CD8-positive, alpha-beta memory T cell (primary cell): ENCODE measurements at regions of chr19 and their contacts with region 1.

Region 1: GRCh38 chr19:51158474-51159129 is 16.5 kb downstream of the SIGLEC7 start:
- DNase-seq: peak; percentile 52 to 75 (median 62)
- H3K4me3 ChIP-seq: no peak overlapping the region
- H3K4me3 Mint-ChIP-seq: peak overlapping the region in 1 of 7 donors; percentile 78
- H3K27ac ChIP-seq: no peak overlapping the region
- H3K27ac Mint-ChIP-seq: peak overlapping the region in 3 of 8 donors; percentile 23 to 83 (median 44)
- H3K4me1 ChIP-seq: peaks cover 7% of the 10 kb centered on the region
- H3K4me1 Mint-ChIP-seq: peaks cover 11 to 14% (median 13%) of the 10 kb centered on the region in 3 donors
- H3K27me3 ChIP-seq: no peaks in the 10 kb centered on the region
- H3K27me3 Mint-ChIP-seq: peaks cover 2 to 8% of the 10 kb centered on the region in 2 donors

Region 2: GRCh38 chr19:51135986-51136762 is 22.4 kb before region 1 on chr19:
- CTCF ChIA-PET with region 1: interaction called, 15 read pairs
- POLR2A ChIA-PET with region 1: no interaction called
- DNase-seq: no peak
- H3K4me3 ChIP-seq: no peak overlapping the region
- H3K4me3 Mint-ChIP-seq: peak overlapping the region in 6 of 7 donors; percentile 17 to 74 (median 58)
- H3K27ac ChIP-seq: no peak overlapping the region
- H3K27ac Mint-ChIP-seq: peak overlapping the region in 4 of 8 donors; percentile 1 to 87 (median 74)
- H3K4me1 ChIP-seq: peaks cover 36% of the 10 kb centered on the region
- H3K4me1 Mint-ChIP-seq: peaks cover 41 to 48% (median 47%) of the 10 kb centered on the region in 3 donors
- H3K27me3 ChIP-seq: no peaks in the 10 kb centered on the region
- H3K27me3 Mint-ChIP-seq: peaks cover 6 to 15% of the 10 kb centered on the region in 2 donors